ENCODE measurements at regions of chr2 and their contacts with region 1.

Region 1: DNA sequence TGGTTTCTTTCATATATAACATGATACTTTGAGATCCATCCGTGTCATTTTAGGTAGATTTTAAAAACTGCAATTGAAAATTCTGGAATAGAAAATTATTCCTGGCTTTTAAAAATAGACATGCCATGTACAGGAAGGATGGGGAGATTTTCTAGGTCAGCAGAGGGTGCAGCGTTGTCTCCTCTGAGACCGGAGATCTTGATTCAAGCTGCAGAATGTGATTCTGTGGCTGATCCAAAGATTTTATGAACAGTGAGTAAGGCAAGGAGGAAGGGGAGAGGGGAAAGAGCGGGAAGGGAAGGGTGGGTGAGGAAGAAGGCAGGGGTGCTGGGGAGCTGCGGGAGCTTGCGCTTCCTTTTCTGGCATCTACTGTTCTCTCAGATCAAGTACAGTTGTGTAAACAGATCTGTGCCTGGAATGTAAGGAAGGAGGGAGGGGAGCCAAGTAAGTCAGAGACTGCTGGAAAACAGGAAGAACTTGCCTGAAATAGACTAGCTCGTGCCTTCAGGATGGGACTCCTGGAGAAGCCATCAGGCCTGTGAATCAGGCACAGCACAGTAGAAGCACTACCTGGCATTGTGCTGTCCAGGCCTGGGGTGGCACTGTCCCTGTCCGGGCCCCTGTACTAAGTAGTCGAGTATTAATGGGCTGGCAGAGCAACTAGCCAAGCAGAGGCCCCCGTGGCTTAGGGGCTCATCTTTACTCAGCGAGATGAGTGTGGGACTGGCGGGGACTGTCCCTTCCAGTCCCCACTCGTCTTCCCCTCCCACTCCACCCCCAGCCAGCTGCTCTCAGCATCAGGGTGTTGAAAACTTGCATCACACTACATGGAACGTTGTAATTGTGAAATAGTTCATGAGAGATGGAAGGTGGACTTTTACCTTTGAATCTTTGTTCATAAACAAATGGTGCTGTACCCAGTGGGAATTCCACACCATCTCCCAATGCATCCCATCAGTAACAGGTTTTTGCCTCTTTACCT is 163.5 kb downstream of the UXS1 start:
- DNase-seq: peak; percentile 78 to 80
- H3K4me3 ChIP-seq: no peak overlapping the region
- H3K4me3 Mint-ChIP-seq: peak overlapping the region; percentile 14
- H3K27ac Mint-ChIP-seq: peak overlapping the region; percentile 87
- H3K4me1 ChIP-seq: peaks cover 50% of the 10 kb centered on the region
- H3K4me1 Mint-ChIP-seq: peaks cover 31% of the 10 kb centered on the region
- H3K27me3 ChIP-seq: no peaks in the 10 kb centered on the region
- H3K27me3 Mint-ChIP-seq: no peaks in the 10 kb centered on the region
- CTCF ChIP-seq: no peak

Region 2: GRCh38 chr2:105943977-105944376 is 86.6 kb before region 1 on chr2:
- CTCF ChIA-PET with region 1: no interaction called
- POLR2A ChIA-PET with region 1: no interaction called
- intact Hi-C with region 1: no loop called
- DNase-seq: peak in 1 of 2 experiments; percentile 12
- H3K4me3 ChIP-seq: no peak overlapping the region
- H3K4me3 Mint-ChIP-seq: no peak overlapping the region
- H3K27ac Mint-ChIP-seq: no peak overlapping the region
- H3K4me1 ChIP-seq: no peaks in the 10 kb centered on the region
- H3K4me1 Mint-ChIP-seq: no peaks in the 10 kb centered on the region
- H3K27me3 ChIP-seq: no peaks in the 10 kb centered on the region
- H3K27me3 Mint-ChIP-seq: no peaks in the 10 kb centered on the region
- CTCF ChIP-seq: no peak

Region 3: GRCh38 chr2:105977212-105977611 is 53.4 kb before region 1 on chr2:
- CTCF ChIA-PET with region 1: no interaction called
- POLR2A ChIA-PET with region 1: no interaction called
- intact Hi-C with region 1: loop called (anchors 1 kb)
- DNase-seq: peak; percentile 77 to 91
- H3K4me3 ChIP-seq: no peak overlapping the region
- H3K4me3 Mint-ChIP-seq: peak overlapping the region; percentile 37
- H3K27ac Mint-ChIP-seq: peak overlapping the region; percentile 95
- H3K4me1 ChIP-seq: peaks cover 30% of the 10 kb centered on the region
- H3K4me1 Mint-ChIP-seq: peaks cover 7% of the 10 kb centered on the region
- H3K27me3 ChIP-seq: no peaks in the 10 kb centered on the region
- H3K27me3 Mint-ChIP-seq: no peaks in the 10 kb centered on the region
- CTCF ChIP-seq: no peak

Region 4: DNA sequence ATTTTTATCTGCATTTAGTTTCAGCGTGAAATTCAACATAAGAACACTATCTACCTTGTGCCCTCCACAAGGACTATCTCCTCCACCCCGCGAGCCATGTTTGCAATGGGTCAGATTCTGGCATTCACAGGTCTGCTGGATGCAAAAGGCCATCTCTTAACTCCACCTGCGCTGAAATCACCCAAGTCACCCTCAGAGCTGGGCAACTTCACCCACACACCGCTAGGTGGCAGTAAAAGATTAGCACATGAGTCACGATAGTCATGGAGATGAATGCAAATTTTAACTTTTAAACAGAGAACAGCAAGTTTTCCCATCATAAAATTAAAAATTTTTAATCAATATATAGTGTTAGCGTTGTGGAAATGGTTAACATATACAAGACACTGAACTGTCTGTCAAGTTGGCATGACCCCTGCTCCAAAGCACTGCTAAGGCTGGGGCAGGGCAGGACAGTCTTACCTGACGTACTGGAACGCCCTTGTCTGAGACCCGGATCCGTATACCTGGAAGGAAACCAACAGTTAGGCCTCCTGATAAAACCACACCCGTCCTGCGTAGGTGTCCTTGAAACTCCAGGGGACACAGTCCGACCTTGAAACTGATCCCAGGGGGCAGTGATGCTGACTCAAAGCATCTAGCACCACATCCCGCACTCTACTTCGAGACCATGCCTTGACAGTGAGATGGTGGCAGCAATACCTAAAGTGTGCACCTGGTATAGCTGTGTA is 73.9 kb after region 1 on chr2:
- CTCF ChIA-PET with region 1: no interaction called
- POLR2A ChIA-PET with region 1: no interaction called
- intact Hi-C with region 1: no loop called
- DNase-seq: peak; percentile 66 to 77
- H3K4me3 ChIP-seq: no peak overlapping the region
- H3K4me3 Mint-ChIP-seq: no peak overlapping the region
- H3K27ac Mint-ChIP-seq: no peak overlapping the region
- H3K4me1 ChIP-seq: no peaks in the 10 kb centered on the region
- H3K4me1 Mint-ChIP-seq: no peaks in the 10 kb centered on the region
- H3K27me3 ChIP-seq: no peaks in the 10 kb centered on the region
- H3K27me3 Mint-ChIP-seq: no peaks in the 10 kb centered on the region
- CTCF ChIP-seq: peak; percentile 94 to 95